Activated CD4-positive, alpha-beta memory T cell treated with anti-CD3 and anti-CD28 coated beads, Interleukin-2, amount 10 ng/mL, durations not matched to agents 7 days and 5 days (primary cell): ENCODE measurements at regions of chr14 and their contacts with region 1.

Region 1: DNA sequence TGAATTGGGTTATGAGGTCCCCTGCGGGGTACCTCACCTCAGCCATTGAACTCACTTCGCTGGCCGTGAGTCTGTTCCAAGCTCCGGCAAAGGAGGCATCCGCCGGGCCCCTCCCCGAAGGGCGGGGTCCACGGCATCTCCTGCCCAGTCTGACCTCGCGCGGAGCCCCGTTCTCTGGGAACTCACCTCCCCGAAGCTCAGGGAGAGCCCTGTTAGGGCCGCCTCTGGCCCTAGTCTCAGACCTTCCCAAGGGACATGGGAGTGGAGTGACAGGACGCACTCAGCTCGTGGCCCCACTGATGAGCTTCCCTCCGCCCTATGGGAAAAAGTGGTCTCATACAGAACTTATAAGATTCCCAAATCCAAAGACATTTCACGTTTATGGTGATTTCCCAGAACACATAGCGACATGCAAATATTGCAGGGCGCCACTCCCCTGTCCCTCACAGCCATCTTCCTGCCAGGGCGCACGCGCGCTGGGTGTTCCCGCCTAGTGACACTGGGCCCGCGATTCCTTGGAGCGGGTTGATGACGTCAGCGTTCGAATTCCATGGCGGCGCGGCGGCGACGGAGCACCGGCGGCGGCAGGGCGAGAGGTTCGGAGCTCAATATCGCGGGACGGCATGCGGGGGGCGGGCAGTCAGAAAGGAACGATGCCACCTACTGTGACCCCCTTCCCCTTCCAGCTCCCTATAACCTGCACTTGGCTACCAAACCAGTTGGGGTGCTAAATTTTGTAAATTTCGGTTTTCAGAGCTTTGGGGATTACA is at the start of gene PARP2:
- DNase-seq: peak; percentile 96
- H3K4me3 Mint-ChIP-seq: peak within 1 kb of the TSS; percentile 89
- H3K27ac Mint-ChIP-seq: peak within 1 kb of the TSS; percentile 84
- H3K4me1 Mint-ChIP-seq: peaks cover 23% of the 10 kb centered on the region
- H3K27me3 Mint-ChIP-seq: peaks cover 3% of the 10 kb centered on the region
- total RNA-seq, gene PARP2: 27.1 to 28.7 TPM

Region 2: DNA sequence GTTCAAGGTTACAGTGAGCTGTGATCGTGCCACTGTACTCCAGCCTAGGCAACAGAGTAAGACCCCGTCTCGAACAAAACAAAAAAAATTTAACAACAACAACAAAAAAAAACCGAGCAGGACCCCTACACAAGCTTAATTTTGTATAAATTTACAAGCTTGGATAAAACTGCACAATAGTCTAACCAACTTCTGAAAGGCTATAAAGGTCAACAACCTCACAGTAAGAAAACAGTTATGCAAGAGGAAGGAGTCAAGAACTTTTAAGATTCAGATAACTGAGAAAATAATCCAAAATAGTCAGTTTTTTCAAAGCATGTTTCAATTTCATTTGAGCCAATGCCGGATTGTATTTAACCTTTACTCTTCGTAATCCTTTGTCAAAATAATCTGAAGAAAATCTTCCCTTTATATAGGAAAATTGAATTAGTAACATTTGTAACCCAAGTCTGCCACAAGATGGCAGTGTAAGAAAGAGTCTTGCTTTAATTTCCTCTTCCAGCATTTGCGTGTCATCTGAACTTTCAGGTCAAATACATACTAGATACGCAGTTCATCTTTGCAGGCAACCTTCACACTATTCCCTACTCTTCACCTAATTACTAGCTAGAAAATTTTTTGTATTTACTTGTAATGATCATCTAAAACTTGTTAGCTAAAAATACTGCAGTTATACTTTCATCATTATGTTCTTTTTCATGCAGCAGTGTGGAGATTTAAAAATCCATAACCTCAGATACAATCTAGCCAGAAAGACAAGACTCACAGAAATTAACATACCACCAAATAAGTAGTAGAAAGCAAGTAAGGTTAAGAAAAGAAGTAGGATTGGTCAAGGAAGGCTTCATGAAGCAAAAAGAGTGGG is 16.0 kb before region 1 on chr14:
- CTCF ChIA-PET with region 1: interaction called, 108 read pairs
- POLR2A ChIA-PET with region 1: interaction called, 144 read pairs
- DNase-seq: no peak
- H3K4me3 Mint-ChIP-seq: no peak overlapping the region
- H3K27ac Mint-ChIP-seq: peak overlapping the region; percentile 64
- H3K4me1 Mint-ChIP-seq: peaks cover 50% of the 10 kb centered on the region
- H3K27me3 Mint-ChIP-seq: no peaks in the 10 kb centered on the region

Region 3: DNA sequence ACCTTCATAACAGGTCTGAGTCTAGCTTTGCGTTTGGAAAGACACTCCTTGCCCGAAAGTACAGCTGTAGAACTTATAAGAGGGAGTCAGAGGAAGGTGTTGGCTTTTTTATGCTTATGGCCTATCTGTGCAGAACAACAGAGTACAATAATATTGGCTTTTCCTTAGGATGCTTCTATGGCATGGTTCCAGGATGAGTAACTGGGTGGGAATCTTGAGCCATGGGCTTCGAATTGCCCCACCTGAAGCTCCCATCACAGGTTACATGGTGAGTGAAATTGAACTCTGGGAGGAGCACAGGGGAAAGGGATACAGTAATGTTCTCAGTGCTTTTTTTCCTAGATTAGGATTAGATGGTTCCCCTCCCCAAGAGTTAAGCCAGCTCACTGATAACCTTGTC is 13.1 kb after region 1 on chr14:
- CTCF ChIA-PET with region 1: interaction called, 9 read pairs
- POLR2A ChIA-PET with region 1: interaction called, 28 read pairs
- DNase-seq: no peak
- H3K4me3 Mint-ChIP-seq: no peak overlapping the region
- H3K27ac Mint-ChIP-seq: no peak overlapping the region
- H3K4me1 Mint-ChIP-seq: peaks cover 5% of the 10 kb centered on the region
- H3K27me3 Mint-ChIP-seq: no peaks in the 10 kb centered on the region

Region 4: GRCh38 chr14:20413045-20413799 is 69.9 kb after region 1 on chr14 and contains the start of gene TEP1:
- CTCF ChIA-PET with region 1: interaction called, 28 read pairs
- POLR2A ChIA-PET with region 1: interaction called, 32 read pairs
- DNase-seq: peak; percentile 81
- H3K4me3 Mint-ChIP-seq: peak within 1 kb of the TSS; percentile 97
- H3K27ac Mint-ChIP-seq: peak within 1 kb of the TSS; percentile 98
- H3K4me1 Mint-ChIP-seq: peaks cover 47% of the 10 kb centered on the region
- H3K27me3 Mint-ChIP-seq: no peaks in the 10 kb centered on the region
- total RNA-seq, gene TEP1: 60.7 to 63.5 TPM

Region 5: GRCh38 chr14:20461274-20462001 is 118.2 kb after region 1 on chr14 and contains the start of gene PIP4P1:
- CTCF ChIA-PET with region 1: interaction called, 13 read pairs
- POLR2A ChIA-PET with region 1: interaction called, 56 read pairs
- DNase-seq: peak; percentile 98
- H3K4me3 Mint-ChIP-seq: peak within 1 kb of the TSS; percentile 97
- H3K27ac Mint-ChIP-seq: peak within 1 kb of the TSS; percentile 90
- H3K4me1 Mint-ChIP-seq: peaks cover 39% of the 10 kb centered on the region
- H3K27me3 Mint-ChIP-seq: no peaks in the 10 kb centered on the region
- total RNA-seq, gene PIP4P1: 39.5 to 42.9 TPM

Region 6: GRCh38 chr14:20613094-20614037 is 270.1 kb after region 1 on chr14:
- CTCF ChIA-PET with region 1: interaction called, 29 read pairs
- POLR2A ChIA-PET with region 1: interaction called, 22 read pairs
- DNase-seq: peak; percentile 86
- H3K4me3 Mint-ChIP-seq: no peak overlapping the region
- H3K27ac Mint-ChIP-seq: no peak overlapping the region
- H3K4me1 Mint-ChIP-seq: peaks cover 21% of the 10 kb centered on the region
- H3K27me3 Mint-ChIP-seq: peaks cover 3% of the 10 kb centered on the region